PC-3 (cell line): ENCODE measurements at regions of chr7 and their contacts with region 1.

Region 1: DNA sequence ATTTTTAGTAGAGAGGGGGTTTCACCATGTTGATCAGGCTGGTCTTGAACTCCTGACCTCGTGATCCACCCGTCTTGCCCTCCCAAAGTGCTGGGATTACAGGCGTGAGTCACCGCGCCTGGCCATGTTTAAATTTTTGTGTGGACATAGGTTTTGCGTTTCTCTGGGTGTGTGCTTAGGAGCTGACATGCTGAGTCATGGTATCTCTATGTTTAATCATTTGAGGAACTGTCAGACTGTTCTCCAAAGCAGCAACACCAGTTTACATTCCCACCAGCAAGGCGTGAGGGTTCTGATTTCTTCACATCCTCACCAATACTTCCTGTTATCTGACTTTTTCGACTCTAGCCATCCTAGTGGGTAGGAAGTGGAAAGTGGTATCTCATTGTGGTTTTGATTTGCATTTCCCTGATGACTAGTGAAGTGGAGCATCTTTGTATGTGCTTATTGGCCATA is 153.7 kb downstream of the DNAJB6 start:
- DNase-seq: peak; percentile 95
- ATAC-seq: peak; percentile 93
- H3K4me3 ChIP-seq: no peak overlapping the region
- H3K27ac ChIP-seq: peak overlapping the region; percentile 89
- H3K4me1 ChIP-seq: peaks cover 20% of the 10 kb centered on the region
- H3K27me3 ChIP-seq: no peaks in the 10 kb centered on the region
- CTCF ChIP-seq: no peak

Region 2: DNA sequence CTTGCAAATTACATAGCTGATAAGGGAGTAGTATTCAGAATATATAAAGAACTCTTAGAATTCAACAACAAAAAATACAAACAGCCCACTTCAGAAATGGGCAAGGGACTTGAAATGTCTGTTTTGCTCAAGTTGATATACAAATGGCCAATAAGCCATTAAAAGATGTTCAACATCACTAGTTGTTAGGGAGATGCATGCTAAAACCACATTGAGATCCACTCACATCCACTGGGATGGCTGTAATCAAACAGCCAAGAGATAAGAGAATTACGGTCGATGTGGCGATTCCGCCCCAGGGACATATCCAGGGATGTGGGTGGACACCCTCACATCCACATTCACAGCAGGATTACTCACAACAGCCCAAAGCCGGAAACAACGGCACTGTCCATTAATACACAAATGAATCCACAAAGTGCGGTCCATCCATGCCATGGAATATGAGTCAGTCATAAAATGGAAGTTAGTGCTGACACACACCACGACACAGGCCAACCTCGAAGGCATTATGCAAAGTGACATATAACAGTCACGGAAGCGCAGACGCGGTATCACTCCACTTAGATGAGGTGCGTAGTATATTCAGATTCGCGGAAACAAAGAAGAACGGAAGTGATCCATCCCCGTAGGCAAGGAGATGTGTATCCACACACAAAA is 74.2 kb after region 1 on chr7:
- CTCF ChIA-PET with region 1: no interaction called
- POLR2A ChIA-PET with region 1: no interaction called
- intact Hi-C with region 1: loop called (anchors 1 kb)
- DNase-seq: peak; percentile 98
- ATAC-seq: peak; percentile 85
- H3K4me3 ChIP-seq: peak overlapping the region; percentile 46; the same call in 1 of the 2 replicates
- H3K27ac ChIP-seq: peak overlapping the region; percentile 99
- H3K4me1 ChIP-seq: peaks cover 36% of the 10 kb centered on the region
- H3K27me3 ChIP-seq: no peaks in the 10 kb centered on the region
- CTCF ChIP-seq: no peak